Activated CD4-positive, alpha-beta T cell treated with anti-CD3 and anti-CD28 coated beads for 36 hours (primary cell): ENCODE measurements at regions of chr19 and their contacts with region 1.

Region 1: DNA sequence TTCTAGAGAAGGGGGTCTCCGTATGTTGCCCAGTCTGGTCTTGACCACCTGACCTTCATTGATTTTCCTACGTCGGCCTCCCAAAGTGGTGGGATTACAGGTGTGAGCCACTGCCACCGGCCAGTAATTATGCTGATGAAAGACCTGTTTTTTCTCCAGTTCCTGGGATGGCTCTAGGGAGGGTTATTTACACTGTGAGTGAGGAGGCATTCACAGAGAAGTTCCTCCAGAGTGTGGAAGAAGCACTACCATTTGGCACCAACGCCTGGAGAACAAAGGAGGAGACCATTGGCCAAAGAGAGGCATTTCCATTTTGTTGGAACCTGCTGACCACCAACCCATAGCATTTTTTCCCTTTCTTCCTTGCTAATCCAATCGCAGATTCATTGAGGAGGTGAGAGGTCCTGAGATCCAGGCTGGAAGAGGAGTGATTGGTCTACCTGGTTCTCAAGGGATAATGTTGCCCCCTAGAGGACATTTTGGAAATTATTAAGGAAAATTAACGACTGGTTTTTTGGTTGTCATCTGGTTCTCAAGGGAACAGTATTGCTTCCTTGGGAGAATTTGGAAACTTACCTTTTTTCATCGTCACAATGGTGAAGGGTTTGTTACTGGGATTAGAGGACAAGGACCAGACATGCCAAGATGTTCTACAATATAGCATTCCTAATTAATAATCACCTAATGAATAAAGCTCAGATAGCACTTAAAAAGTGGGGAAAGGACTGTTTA is 5.5 kb upstream of the SAE1 start:
- DNase-seq: peak; percentile 14
- ATAC-seq: peak; percentile 64
- H3K4me3 Mint-ChIP-seq: no peak overlapping the region
- H3K27ac Mint-ChIP-seq: peak overlapping the region; percentile 20
- H3K4me1 Mint-ChIP-seq: peaks cover 3% of the 10 kb centered on the region
- H3K27me3 Mint-ChIP-seq: no peaks in the 10 kb centered on the region

Region 2: DNA sequence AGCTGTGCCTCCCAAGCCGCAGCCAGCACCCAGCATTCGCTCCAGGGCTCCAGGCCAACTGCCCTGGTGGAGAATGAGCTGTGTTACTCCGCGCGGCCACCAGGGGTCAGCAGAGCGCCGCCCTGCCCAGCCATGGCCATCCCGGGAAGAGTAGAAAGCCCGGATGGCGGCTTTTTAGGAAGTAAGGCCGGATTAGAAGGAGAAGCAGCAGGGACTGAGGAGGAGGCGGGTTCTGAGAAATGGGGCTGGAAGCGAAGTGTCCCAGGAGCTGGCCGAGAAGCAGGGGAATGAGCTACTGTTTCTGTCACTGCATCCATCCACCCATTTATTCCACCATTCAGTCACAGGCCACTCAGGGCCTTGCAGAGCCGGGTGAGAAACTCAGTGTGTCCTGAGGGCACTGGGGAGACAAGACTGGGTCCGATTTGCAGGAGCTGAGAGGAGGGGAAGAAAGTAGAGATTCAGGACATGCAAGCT is 112.0 kb before region 1 on chr19:
- CTCF ChIA-PET with region 1: interaction called, 17 read pairs
- POLR2A ChIA-PET with region 1: no interaction called
- intact Hi-C with region 1: loop called (anchors 1 to 2 kb)
- DNase-seq: peak; percentile 79
- ATAC-seq: peak; percentile 87
- H3K4me3 Mint-ChIP-seq: no peak overlapping the region
- H3K27ac Mint-ChIP-seq: no peak overlapping the region
- H3K4me1 Mint-ChIP-seq: peaks cover 7% of the 10 kb centered on the region
- H3K27me3 Mint-ChIP-seq: no peaks in the 10 kb centered on the region

Region 3: DNA sequence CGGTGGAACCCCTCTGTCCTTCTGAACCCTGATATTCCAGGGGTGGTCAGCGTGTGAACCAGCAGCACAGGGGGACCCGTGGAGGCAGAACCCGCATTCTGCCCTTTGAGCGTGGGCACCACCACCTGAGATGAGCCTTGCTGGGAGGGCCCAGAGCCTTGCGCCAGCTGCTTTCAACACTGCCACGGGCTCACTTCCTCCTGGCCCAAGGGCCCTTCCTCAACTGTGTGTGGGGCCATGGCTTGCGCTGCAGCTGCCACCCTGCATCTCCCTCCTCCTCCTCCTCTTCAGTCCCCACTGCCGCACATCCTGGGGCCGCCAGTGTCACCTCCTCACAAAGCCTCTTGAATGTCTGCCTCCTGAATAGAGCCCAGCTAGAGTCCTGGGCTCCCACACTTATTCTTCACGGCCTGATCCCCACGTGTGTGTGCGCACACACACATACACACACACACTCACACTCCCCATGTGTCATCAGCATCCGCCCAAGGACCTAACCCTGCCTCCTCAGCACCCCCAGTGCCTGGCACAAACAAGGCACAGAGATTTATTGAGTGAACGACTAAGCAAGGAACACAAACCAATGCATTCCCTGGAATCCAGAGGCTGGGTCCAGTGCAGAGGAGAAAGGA is 49.8 kb before region 1 on chr19:
- CTCF ChIA-PET with region 1: interaction called, 12 read pairs
- POLR2A ChIA-PET with region 1: no interaction called
- intact Hi-C with region 1: loop called (anchors 1 kb)
- DNase-seq: no peak
- ATAC-seq: no peak
- H3K4me3 Mint-ChIP-seq: no peak overlapping the region
- H3K27ac Mint-ChIP-seq: no peak overlapping the region
- H3K4me1 Mint-ChIP-seq: peaks cover 3% of the 10 kb centered on the region
- H3K27me3 Mint-ChIP-seq: no peaks in the 10 kb centered on the region

Region 4: GRCh38 chr19:47081111-47081510 is 44.0 kb before region 1 on chr19:
- CTCF ChIA-PET with region 1: interaction called, 12 read pairs
- POLR2A ChIA-PET with region 1: no interaction called
- intact Hi-C with region 1: loop called (anchors 1 kb)
- DNase-seq: no peak
- ATAC-seq: no peak
- H3K4me3 Mint-ChIP-seq: no peak overlapping the region
- H3K27ac Mint-ChIP-seq: peak overlapping the region; percentile 42
- H3K4me1 Mint-ChIP-seq: no peaks in the 10 kb centered on the region
- H3K27me3 Mint-ChIP-seq: no peaks in the 10 kb centered on the region

Region 5: DNA sequence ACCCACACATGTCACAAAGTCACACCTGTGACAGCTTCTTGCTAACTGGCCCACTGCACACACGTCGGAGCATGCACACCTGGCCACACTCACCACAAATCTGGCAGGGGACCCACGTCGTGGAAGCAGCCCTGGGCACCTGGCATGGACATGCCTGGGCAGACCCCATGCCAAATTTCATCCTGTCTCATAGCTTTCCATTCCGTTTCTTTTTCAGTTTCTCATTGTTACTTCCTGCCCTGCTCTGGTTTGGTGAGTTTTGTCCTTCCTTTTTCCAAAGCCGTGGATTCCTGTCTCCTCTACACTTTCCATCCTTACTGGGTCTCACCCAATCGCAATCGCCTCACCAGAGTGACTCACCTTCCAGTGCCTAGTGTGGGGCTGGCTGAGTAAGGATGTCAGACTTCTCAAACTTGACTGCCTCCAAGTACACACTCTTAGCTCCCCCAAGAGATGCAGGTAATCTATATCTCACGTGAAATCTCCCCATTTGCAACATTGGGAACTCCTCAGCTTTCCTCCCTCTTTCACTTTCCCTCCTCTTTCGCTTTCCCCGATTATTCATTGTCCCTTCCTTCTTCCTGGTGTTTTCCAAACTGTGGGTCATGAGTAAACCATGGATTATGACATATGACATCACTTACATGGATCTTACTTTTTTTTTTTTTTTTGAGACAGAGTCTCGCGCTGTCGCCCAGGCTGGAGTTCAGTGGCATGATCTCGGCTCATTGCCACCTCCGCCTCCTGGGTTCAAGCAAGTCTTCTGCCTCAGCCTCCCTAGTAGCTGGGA is 107.5 kb after region 1 on chr19:
- CTCF ChIA-PET with region 1: no interaction called
- POLR2A ChIA-PET with region 1: no interaction called
- intact Hi-C with region 1: no loop called
- DNase-seq: peak; percentile 66
- ATAC-seq: peak; percentile 31
- H3K4me3 Mint-ChIP-seq: peak overlapping the region; percentile 61
- H3K27ac Mint-ChIP-seq: peak overlapping the region; percentile 76
- H3K4me1 Mint-ChIP-seq: peaks cover 22% of the 10 kb centered on the region
- H3K27me3 Mint-ChIP-seq: no peaks in the 10 kb centered on the region